Posterior vena cava (tissue), 2 donors: ENCODE measurements at regions of chr22 and their contacts with region 1.

Region 1: GRCh38 chr22:40332319-40332781 is 13.9 kb upstream of the ADSL start:
- DNase-seq: no peak

Region 2: GRCh38 chr22:40224702-40225101 is 107.6 kb before region 1 on chr22:
- intact Hi-C with region 1: no loop called
- DNase-seq: no peak

Region 3: DNA sequence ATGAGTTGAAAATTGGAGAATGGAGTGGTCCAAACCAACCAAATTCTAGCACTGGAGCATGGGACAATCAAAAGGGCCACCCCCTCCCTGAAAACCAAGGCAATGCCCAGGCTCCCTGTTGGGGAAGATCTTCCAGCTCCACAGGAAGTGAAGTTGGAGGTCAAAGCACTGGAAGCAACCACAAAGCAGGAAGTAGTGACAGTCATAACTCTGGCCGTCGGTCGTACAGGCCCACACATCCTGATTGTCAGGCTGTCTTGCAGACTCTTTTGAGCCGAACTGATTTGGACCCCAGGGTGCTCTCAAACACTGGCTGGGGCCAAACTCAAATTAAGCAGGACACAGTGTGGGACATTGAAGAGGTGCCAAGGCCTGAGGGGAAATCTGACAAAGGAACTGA is 66.6 kb before region 1 on chr22:
- intact Hi-C with region 1: no loop called
- DNase-seq: no peak

Region 4: DNA sequence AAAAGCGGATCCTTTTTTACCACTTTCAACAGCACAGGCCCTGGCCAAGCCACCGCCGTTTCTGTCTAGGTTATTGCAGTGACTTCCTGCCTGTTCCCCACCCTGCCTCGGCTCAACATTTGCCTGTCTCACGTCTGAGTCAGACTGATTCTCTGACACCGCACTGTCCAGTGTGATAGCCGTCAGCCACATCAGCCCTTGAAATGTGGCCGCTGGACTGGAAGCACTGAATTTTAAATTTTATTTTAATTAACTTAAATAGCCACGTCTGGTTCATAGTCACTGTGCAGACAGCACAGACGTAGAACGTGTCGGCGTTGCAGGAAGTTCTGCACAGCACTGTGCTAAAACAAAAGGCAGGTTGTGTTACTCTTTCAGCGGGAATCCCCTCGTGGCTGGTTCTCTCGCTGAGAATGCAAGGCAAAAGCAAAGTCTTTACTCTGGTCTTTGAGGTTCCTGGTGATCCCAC is 42.3 kb before region 1 on chr22:
- intact Hi-C with region 1: loop called in 1 of 2 experiments (anchors 10 kb)
- DNase-seq: no peak

Region 5: DNA sequence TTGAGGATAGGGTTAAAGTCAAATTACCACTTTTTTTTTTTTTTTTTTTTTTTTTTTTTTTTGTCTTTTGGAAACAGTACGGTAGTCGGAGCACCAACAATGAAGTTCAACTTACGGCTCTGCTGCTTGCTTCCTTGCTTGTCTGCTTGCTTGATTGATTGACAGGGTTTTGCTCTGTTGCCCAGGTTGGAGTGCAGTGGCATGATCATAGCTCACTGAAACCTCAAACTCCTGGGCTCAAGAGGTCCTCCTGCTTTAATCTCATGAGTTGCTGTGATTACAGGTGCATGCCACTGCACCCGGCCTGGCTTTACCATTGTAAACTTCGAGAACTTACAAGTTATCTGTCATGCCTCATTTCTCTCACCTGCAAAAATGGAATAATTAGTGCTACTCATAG is 43.8 kb after region 1 on chr22:
- intact Hi-C with region 1: no loop called
- DNase-seq: no peak